Mammary epithelial cell (primary cell): ENCODE measurements at regions of chr15 and their contacts with region 1.

Region 1: GRCh38 chr15:101510212-101511197 is 21.0 kb upstream of the PCSK6 start:
- DNase-seq: no peak
- H3K4me3 ChIP-seq: no peak overlapping the region
- H3K27ac ChIP-seq: no peak overlapping the region
- H3K4me1 ChIP-seq: no peaks in the 10 kb centered on the region
- H3K27me3 ChIP-seq: no peaks in the 10 kb centered on the region
- CTCF ChIP-seq: no peak

Region 2: GRCh38 chr15:101221902-101222301 is 288.6 kb before region 1 on chr15:
- CTCF ChIA-PET with region 1: no interaction called
- dilution Hi-C with region 1: no loop called
- in situ Hi-C with region 1: no loop called
- intact Hi-C with region 1: no loop called
- DNase-seq: no peak
- H3K4me3 ChIP-seq: no peak overlapping the region
- H3K27ac ChIP-seq: no peak overlapping the region
- H3K4me1 ChIP-seq: no peaks in the 10 kb centered on the region
- H3K27me3 ChIP-seq: no peaks in the 10 kb centered on the region
- CTCF ChIP-seq: no peak

Region 3: GRCh38 chr15:101469520-101470288 is 40.8 kb before region 1 on chr15:
- CTCF ChIA-PET with region 1: no interaction called
- dilution Hi-C with region 1: no loop called
- in situ Hi-C with region 1: no loop called
- intact Hi-C with region 1: no loop called
- DNase-seq: no peak
- H3K4me3 ChIP-seq: peak overlapping the region in 1 of 3 experiments; percentile 9
- H3K27ac ChIP-seq: no peak overlapping the region
- H3K4me1 ChIP-seq: peaks cover 6% of the 10 kb centered on the region
- H3K27me3 ChIP-seq: no peaks in the 10 kb centered on the region
- CTCF ChIP-seq: no peak

Region 4: GRCh38 chr15:101578437-101578894 is 68.0 kb after region 1 on chr15:
- CTCF ChIA-PET with region 1: no interaction called
- dilution Hi-C with region 1: no loop called
- in situ Hi-C with region 1: no loop called
- intact Hi-C with region 1: no loop called
- DNase-seq: peak; percentile 28
- H3K4me3 ChIP-seq: no peak overlapping the region
- H3K27ac ChIP-seq: no peak overlapping the region
- H3K4me1 ChIP-seq: peaks cover 5% of the 10 kb centered on the region
- H3K27me3 ChIP-seq: no peaks in the 10 kb centered on the region
- CTCF ChIP-seq: peak; percentile 55 to 77

Region 5: GRCh38 chr15:101608201-101608600 is 97.7 kb after region 1 on chr15:
- CTCF ChIA-PET with region 1: no interaction called
- dilution Hi-C with region 1: loop called (anchors 5 kb)
- in situ Hi-C with region 1: no loop called
- intact Hi-C with region 1: no loop called
- DNase-seq: no peak
- H3K4me3 ChIP-seq: no peak overlapping the region
- H3K27ac ChIP-seq: no peak overlapping the region
- H3K4me1 ChIP-seq: no peaks in the 10 kb centered on the region
- H3K27me3 ChIP-seq: peaks cover 2% of the 10 kb centered on the region
- CTCF ChIP-seq: no peak